HepG2 (cell line): ENCODE measurements at regions of chr22 and their contacts with region 1.

Region 1: DNA sequence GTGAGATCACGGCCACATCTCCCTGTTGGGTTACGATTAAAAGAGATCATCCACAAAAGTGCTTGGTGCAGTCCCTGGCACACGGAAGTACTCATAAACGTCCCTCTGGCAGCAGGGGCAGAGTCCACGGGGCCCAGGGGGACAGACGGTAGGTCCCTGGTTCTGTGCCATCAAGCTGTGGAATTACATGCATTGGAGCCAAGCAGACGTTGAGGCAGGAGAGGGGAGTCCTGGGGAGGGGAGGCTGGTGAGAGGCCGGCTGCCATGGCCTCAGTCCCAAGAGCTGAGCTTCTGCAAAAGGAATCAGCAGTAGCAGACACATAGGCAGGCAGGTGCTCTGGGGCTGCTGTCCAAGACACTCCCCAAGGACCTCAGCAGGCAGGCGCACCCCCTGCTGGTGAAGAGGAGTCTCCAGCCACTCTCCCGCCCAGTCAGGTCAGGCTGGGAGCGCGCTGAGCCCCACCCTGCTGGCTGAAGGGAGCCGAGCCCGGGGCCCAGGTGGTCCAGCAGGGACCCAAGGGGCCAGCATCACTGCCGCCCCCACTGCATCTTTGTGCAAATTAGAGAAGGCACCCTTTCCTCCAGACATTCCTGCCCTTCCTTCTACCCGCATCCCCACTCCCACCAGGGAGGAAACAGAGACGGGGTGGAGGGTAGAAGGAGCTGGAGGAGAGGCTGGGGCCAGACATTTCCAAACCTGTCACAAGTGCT is 7.6 kb upstream of the KCTD17 start:
- DNase-seq: peak; percentile 77
- ATAC-seq: peak; percentile 95
- H3K4me3 ChIP-seq: peak overlapping the region in 2 of 3 experiments; percentile 38 to 62; a peak in 5 of 6 replicates
- H3K27ac ChIP-seq: peak overlapping the region; percentile 78
- H3K4me1 ChIP-seq: peaks cover 84% of the 10 kb centered on the region
- H3K27me3 ChIP-seq: 0 out of 5 replicates have a peak, but pooled peaks cover 0 to under 1% of the 10 kb centered on the region in 2 experiments
- CTCF ChIP-seq: peak; percentile 97
- EP300 ChIP-seq: peak in 1 of 2 experiments; percentile 4; a peak in 2 of 4 replicates
- POLR2A ChIP-seq: peak in 1 of 2 experiments; percentile 62; a peak in 2 of 4 replicates
- RAD21 ChIP-seq: peak; percentile 93

Region 2: GRCh38 chr22:37026325-37026724 is 17.7 kb before region 1 on chr22:
- CTCF ChIA-PET with region 1: interaction called, 4 read pairs
- POLR2A ChIA-PET with region 1: interaction called, 227 read pairs
- in situ Hi-C with region 1: no loop called
- intact Hi-C with region 1: loop called (anchors 2 kb)
- DNase-seq: no peak
- ATAC-seq: no peak
- H3K4me3 ChIP-seq: no peak overlapping the region
- H3K27ac ChIP-seq: peak overlapping the region; percentile 64
- H3K4me1 ChIP-seq: peaks cover 97% of the 10 kb centered on the region
- H3K27me3 ChIP-seq: no peaks in the 10 kb centered on the region
- CTCF ChIP-seq: no peak
- EP300 ChIP-seq: no peak
- POLR2A ChIP-seq: peak in 1 of 2 experiments; percentile 51; a peak in 2 of 4 replicates
- RAD21 ChIP-seq: no peak

Region 3: GRCh38 chr22:37186228-37186996 is 142.4 kb after region 1 on chr22:
- CTCF ChIA-PET with region 1: no interaction called
- POLR2A ChIA-PET with region 1: no interaction called
- in situ Hi-C with region 1: no loop called
- intact Hi-C with region 1: no loop called
- DNase-seq: peak; percentile 64
- ATAC-seq: peak; percentile 44
- H3K4me3 ChIP-seq: no peak overlapping the region
- H3K27ac ChIP-seq: no peak overlapping the region
- H3K4me1 ChIP-seq: peaks cover 22% of the 10 kb centered on the region
- H3K27me3 ChIP-seq: no peaks in the 10 kb centered on the region
- CTCF ChIP-seq: no peak
- EP300 ChIP-seq: no peak
- POLR2A ChIP-seq: no peak
- RAD21 ChIP-seq: no peak